Breast epithelium (tissue), 4 donors: ENCODE measurements at regions of chr17 and their contacts with region 1.

Region 1: DNA sequence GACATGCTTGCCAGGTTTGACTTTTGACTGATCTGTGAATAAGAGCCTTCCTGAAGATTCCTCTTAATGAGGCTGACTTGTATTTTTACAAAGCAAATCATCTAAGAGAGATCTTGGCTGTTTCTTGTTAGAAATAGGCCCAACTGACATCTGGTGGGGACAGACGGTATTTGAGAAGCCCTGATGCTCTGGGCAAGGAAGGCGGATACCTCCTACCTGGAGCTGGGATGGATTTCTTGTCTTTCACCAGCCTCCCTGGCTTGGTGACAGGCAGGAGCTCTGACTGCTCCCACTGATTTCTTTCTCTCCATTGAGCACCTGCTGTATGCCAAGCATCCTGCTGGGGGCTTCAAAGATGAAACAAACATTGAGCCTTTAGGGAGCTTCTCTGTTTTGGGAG is 40.4 kb downstream of the AKAP1 start:
- DNase-seq: no peak
- H3K4me3 ChIP-seq: no peak overlapping the region
- H3K27ac ChIP-seq: no peak overlapping the region
- H3K4me1 ChIP-seq: no peaks in the 10 kb centered on the region
- H3K27me3 ChIP-seq: no peaks in the 10 kb centered on the region
- CTCF ChIP-seq: no peak
- POLR2A ChIP-seq: no peak

Region 2: DNA sequence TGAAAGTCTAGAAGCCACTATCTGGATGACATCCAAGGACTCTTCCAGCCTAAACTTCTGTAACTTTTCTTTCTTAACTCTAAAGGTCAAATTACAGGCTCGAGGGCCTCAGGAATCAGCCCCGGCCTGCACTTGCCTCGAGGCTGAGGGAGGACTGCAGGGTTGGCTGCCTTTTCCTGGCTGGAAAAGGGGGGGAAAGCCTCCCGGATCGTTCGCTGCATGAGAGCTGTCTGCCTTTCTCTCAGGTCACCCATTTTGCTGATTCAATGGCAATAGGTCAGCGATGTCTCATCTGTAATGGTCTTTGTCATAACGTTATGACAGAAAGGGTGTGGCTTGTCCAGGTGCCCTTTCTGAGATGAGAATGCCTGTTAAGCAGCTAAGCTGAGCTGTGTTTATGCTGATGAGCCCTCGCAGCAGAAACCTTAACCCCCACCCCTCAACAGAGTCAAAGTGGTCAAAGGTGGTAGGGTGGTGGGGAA is 41.4 kb after region 1 on chr17:
- intact Hi-C with region 1: no loop called
- DNase-seq: no peak
- H3K4me3 ChIP-seq: no peak overlapping the region
- H3K27ac ChIP-seq: no peak overlapping the region
- H3K4me1 ChIP-seq: no peaks in the 10 kb centered on the region
- H3K27me3 ChIP-seq: no peaks in the 10 kb centered on the region
- CTCF ChIP-seq: no peak
- POLR2A ChIP-seq: no peak

Region 3: DNA sequence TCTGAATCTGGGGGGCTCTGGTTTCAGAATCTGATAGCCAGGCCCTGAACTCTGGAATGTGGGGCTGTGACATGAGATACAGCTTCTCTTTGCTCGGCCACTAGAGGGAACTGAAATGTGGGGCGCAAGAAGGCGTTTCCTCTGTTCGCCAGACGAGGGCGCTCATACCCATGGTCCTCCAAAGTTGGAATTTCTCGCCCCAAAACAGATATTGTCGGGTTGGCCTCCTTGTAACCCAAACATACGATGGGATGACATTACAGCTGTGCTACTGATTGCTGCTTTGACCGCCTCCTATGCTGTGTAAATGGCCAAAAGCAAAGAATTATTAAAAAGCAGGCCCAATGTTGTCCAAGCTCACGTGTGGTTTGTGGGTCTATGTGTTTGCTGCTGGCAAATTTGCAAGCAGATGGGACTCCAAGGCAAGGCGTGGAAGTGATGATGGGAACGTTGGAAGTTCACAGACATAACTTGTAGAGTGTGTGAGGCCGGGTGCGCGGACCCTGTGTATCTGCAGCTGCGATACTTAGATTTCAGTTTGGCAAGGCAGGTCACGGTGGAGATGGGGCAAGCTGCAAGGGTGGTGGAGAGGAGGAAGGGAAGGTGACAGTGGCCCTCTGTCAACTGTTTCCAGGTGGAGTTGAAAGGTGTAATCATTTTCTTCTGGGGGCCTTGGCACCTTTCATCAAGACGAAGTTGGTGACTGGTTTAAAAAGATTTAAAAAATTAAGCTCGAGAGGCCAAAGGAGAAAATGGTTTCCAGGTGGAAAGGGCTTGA is 118.0 kb after region 1 on chr17:
- intact Hi-C with region 1: loop called (anchors 2 kb)
- DNase-seq: peak in 1 of 2 donors; percentile 66
- H3K4me3 ChIP-seq: no peak overlapping the region
- H3K27ac ChIP-seq: no peak overlapping the region
- H3K4me1 ChIP-seq: no peaks in the 10 kb centered on the region
- H3K27me3 ChIP-seq: no peaks in the 10 kb centered on the region
- CTCF ChIP-seq: peak; percentile 97 to 99 (median 99)
- POLR2A ChIP-seq: no peak